ENCODE measurements at regions of chr11 and their contacts with region 1.

Region 1: DNA sequence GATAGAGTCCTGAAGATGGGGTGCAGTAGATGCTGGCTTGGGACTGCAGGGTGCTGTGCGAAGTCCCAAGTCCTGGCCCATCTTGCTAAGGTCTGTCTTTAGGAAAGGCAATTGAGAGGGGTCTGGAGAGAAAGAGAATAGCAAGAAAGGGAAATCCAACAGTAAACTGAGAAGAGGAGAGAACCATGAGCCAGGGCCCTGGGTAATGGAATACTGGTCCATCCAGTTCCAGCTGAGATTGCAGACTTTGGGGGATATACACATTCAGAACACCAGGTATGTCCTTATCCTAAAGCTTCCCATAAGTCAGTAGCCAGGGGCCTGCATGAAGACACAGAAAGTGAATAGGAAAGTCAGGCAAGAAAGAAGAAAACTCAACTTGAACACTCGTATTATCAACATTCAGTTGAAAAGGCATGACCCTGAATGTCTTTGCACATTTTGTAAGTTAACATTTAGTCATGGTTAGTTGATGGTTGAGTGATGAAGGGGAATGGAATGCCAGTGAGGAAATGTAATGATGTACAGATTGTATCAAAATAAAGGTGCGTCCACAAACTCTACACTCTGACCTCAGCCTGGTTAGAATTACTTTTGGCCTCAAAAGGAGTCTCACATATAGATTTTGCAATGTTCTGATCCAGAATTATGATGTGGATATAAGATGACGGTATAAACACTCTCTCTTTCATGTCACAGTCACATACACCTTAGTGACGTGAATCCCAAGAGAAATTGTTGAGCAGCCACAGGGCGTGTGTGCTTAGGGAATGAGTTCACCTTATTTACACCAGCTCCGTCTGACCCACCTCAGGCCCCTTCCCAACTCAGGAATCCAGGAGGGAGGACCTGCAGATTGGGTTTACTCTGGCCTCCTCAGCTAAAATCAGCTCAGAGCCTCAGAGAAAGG is 100.3 kb downstream of the RDX start:
- DNase-seq: no peak
- H3K4me3 Mint-ChIP-seq: no peak overlapping the region
- H3K27ac Mint-ChIP-seq: no peak overlapping the region
- H3K4me1 Mint-ChIP-seq: peaks cover 13% of the 10 kb centered on the region
- H3K27me3 Mint-ChIP-seq: peaks cover 11% of the 10 kb centered on the region

Region 2: DNA sequence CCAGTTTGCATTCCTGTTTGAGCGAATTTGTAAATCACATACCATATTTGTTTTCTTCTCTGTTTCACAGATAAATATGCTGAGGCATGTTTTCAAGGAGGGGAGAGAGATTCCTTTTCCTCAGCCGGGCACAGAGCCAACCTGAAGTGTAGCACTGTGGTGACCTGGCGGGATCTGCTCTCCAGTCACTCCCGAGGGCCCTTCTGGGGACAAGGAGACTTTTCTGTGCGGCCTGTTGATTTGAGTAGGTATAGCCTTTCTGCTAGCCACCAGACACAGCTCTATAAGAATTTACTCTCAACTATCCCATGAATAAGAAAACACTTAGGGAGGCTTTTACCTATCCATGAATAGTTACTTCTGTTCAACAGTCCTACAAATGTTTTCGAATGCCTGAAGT is 170.2 kb after region 1 on chr11:
- CTCF ChIA-PET with region 1: interaction called, 63 read pairs
- DNase-seq: no peak
- H3K4me3 Mint-ChIP-seq: no peak overlapping the region
- H3K27ac Mint-ChIP-seq: no peak overlapping the region
- H3K4me1 Mint-ChIP-seq: peaks cover 8% of the 10 kb centered on the region
- H3K27me3 Mint-ChIP-seq: no peaks in the 10 kb centered on the region

Region 3: DNA sequence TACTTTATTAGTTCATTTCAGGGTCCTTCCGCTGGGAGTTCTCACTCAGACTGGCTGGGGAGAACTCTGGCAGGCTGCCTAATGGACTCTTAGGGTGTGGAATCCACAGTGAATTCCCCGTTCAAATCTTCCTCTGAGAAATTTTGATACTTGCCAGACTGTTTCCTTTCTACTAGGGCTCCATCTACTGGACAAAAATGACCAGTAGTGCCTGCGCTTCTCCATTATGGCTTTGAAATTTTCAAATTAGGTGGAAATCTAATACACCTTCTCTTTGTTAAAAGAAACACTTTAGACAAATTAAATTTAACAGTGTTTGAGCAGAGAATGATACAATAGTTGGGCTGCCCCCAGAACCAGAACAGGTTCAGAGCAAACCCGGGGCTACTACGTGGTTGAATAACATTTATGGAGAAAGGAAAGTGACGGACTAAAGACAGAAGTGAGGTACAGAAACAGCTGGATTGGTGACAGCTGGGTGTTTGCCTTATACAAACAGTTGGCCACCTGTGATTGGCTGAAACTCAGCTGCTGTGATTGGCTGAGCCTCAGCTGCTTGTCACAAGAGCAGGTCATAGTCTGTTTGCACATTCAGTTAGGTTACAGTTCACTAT is 180.7 kb after region 1 on chr11:
- CTCF ChIA-PET with region 1: interaction called, 52 read pairs
- DNase-seq: peak; percentile 29
- H3K4me3 Mint-ChIP-seq: no peak overlapping the region
- H3K27ac Mint-ChIP-seq: no peak overlapping the region
- H3K4me1 Mint-ChIP-seq: peaks cover 15% of the 10 kb centered on the region
- H3K27me3 Mint-ChIP-seq: no peaks in the 10 kb centered on the region

Region 4: DNA sequence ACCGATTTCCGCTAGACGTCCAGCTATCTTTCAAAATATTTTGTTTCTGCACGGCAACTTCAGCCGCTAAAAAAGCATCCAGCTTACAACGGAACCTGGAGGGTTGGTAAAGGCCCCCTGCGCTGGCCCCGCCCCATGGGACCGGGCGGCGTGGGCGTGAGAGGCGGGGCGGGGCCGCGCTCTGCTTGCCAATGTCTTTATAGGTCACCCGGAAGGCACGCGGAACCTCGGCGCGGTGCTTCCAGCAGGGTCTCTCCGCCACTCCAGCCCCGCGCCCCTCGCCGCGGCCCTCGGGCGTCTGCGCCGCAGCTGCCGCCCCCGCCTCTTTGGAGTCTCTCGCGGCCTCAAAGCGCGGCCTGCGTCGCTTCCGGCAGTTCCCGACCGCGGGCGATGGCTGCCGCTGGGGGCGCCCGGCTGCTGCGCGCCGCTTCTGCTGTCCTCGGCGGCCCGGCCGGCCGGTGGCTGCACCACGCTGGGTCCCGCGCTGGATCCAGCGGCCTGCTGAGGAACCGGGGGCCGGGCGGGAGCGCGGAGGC is 233.7 kb after region 1 on chr11 and contains the start of gene FDX1:
- CTCF ChIA-PET with region 1: interaction called, 89 read pairs
- DNase-seq: peak; percentile 83
- H3K4me3 Mint-ChIP-seq: peak within 1 kb of the TSS; percentile 96
- H3K27ac Mint-ChIP-seq: peak within 1 kb of the TSS; percentile 93
- H3K4me1 Mint-ChIP-seq: peaks cover 41% of the 10 kb centered on the region
- H3K27me3 Mint-ChIP-seq: no peaks in the 10 kb centered on the region

Measured in activated naive CD4-positive, alpha-beta T cell treated with anti-CD3 and anti-CD28 coated beads, Interleukin-2, amount 10 ng/mL, durations not matched to agents 7 days and 5 days (primary cell).